HEK293 (cell line): ENCODE measurements at regions of chr15 and their contacts with region 1.

Region 1: GRCh38 chr15:90886041-90886614 is 1.8 kb downstream of the FES start:
- H3K4me3 ChIP-seq: no peak overlapping the region
- H3K27ac ChIP-seq: no peak overlapping the region
- H3K4me1 ChIP-seq: no peaks in the 10 kb centered on the region
- CTCF ChIP-seq: peak; percentile 94

Region 2: DNA sequence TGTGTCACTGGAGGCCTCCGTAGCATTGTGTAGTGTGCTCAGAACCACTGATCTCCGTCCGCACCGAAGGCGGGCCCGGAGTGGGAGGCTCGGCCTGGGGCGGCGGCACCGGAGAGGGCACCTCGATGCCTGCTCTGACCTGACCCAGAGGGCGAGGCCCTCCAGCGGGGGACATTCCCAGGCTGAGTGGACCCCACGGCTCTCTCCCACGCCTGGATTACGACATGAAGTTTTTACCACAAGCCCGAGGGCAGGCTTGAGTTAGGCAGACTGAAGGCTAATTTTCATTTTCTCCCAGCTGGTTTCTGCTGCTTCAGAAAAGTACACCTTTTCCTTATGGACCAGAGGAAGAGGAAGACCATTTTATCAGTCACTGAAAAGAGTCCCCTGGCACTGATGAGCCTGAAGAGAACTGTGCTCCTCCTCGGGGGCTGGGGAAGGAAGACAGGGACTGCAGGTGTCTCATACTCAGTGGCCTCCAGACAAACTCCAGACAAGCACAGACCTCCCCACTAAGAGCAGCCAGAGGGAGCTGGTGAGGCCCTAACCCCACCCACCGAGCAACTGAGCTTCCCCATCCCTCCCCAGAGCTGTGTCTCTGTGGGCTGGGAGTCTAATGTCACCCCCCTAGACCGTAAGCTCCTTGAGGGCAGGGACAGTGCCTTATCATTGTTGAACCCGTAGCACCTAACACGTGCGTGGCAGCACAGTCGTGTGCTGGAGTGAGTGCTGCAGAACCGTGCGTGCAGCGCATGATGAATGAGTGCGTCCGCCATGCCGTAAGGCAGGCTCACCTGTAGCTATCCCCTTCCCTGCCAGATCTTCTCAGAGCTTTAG is 243.4 kb before region 1 on chr15:
- CTCF ChIA-PET with region 1: interaction called, 44 read pairs
- POLR2A ChIA-PET with region 1: interaction called, 6 read pairs
- H3K4me3 ChIP-seq: no peak overlapping the region
- H3K27ac ChIP-seq: no peak overlapping the region
- H3K4me1 ChIP-seq: no peaks in the 10 kb centered on the region
- CTCF ChIP-seq: no peak

Region 3: GRCh38 chr15:90648137-90649070 is 237.7 kb before region 1 on chr15:
- CTCF ChIA-PET with region 1: interaction called, 44 read pairs
- POLR2A ChIA-PET with region 1: interaction called, 6 read pairs
- H3K4me3 ChIP-seq: no peak overlapping the region
- H3K27ac ChIP-seq: no peak overlapping the region
- H3K4me1 ChIP-seq: no peaks in the 10 kb centered on the region
- CTCF ChIP-seq: peak; percentile 62; the same call in 1 of the 2 replicates

Region 4: DNA sequence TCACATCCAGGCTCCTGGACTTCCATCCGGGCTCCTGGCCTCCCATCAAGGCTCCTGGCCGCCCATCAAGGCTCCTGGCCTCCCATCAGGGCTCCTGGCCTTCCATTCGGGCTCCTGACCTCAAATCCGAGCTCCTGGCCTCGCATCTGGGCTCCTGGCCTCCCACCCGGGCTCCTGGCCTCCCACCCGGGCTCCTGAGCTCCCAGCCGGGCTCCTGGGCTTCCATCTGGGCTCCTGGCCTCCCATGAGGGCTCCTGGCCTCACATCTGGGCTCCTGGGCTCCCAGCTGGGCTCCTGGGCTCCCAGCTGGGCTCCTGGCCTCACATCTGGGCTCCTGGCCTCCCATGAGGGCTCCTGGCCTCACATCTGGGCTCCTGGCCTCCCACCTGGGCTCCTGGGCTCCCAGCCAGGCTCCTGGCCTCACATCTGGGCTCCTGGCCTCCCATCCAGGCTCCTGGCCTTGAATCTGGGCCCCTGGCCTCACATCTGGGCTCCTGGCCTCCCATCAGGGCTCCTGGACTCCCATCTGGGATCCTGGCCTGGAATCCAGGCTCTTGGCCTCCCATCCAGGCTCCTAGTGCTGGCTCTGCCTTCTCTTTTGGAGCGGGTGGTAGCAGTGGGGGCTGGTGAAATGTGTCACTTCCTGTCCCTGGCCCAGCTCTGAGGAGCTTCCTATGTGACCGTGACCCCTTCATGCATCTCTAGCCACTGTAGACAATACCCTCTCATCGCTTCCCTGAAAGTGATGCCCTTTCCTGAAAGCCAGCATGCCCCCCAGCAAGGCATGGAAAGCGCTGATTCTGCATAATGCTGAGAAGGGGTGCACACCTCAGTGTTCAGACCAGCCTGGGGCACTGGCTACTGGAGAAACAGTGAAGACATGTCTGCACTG is 231.6 kb before region 1 on chr15:
- CTCF ChIA-PET with region 1: interaction called, 22 read pairs
- POLR2A ChIA-PET with region 1: no interaction called
- H3K4me3 ChIP-seq: no peak overlapping the region
- H3K27ac ChIP-seq: no peak overlapping the region
- H3K4me1 ChIP-seq: no peaks in the 10 kb centered on the region
- CTCF ChIP-seq: no peak

Region 5: GRCh38 chr15:90762109-90762508 is 124.0 kb before region 1 on chr15:
- CTCF ChIA-PET with region 1: interaction called, 10 read pairs
- POLR2A ChIA-PET with region 1: no interaction called
- H3K4me3 ChIP-seq: no peak overlapping the region
- H3K27ac ChIP-seq: no peak overlapping the region
- H3K4me1 ChIP-seq: no peaks in the 10 kb centered on the region
- CTCF ChIP-seq: no peak

Region 6: DNA sequence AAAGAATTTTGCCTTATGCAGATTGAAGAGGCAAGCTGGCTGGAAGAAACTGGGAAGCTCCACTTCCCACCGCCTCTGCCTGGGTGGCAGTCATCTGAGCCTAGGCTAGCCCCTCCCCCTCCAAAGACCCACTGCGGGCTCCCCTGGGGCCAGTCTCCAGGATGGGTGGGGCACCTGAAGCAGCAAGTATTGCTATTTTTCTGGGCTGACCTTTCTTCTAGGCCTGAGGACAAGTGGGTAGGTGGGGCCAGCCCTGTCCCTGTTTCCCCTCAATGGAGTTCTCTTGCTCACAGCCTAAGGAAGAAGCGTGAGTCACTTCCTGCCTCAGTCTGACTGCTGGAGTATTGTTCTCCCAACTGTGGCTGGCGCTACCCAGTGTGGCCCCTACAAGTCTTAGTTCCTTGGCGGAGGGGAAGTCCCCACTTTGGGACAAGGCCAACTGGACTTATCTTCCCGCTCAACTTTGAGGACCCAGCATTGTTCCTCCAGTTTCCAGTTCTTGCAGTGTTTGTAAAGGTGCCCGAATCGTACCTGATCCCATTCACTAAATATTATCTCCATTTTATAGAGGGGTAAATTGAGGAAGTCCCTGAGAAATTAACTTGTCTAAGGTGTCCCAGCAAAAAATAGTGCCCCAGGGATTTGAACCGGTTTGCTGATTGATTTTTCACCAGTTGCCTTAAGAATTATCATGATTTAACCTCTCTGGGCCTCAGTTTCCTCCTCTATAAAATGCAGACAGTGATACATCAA is 16.4 kb before region 1 on chr15:
- CTCF ChIA-PET with region 1: interaction called, 23 read pairs
- POLR2A ChIA-PET with region 1: interaction called, 3 read pairs
- H3K4me3 ChIP-seq: no peak overlapping the region
- H3K27ac ChIP-seq: peak overlapping the region; percentile 96
- H3K4me1 ChIP-seq: peaks cover 54% of the 10 kb centered on the region
- CTCF ChIP-seq: no peak

Region 7: DNA sequence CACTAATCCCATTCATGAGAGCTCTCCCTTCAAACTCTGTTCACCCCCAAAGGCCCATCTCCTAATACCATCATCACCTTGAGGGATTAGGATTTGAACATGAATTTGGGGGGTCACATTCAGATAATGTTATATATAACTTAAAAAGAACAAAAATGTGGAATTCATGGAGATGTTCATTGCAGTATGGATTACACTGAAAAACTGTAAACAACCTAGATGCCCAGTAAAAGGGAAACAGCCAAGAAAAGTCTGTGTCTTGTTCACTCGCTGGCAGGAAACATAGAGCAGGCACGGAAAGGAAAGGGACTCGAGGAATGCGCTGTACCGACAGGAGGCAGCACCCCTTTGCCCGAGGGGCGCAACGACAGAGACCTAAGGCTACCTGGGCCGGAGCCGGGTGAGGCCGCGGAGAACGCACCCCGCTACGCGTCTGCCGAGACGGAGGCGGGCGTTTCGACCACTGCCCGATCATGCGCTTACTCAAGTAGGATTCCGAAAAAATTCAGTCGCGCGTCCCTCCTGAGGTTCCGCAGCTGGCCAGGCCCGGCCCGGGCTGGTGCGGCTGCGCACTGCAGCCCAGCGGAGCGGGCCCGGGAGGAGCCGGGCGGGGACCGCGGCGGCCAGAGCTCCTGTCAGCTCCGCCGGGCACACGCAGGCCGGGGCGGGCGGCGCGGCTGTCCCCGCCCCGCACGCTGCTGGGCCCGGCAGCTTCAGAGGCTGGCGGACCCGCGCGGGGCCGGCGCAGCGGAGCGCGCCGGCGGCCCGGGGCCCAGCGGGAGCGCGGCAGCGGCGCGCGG is 16.1 kb after region 1 on chr15:
- CTCF ChIA-PET with region 1: interaction called, 17 read pairs
- POLR2A ChIA-PET with region 1: interaction called, 4 read pairs
- H3K4me3 ChIP-seq: peak overlapping the region; percentile 74
- H3K27ac ChIP-seq: peak overlapping the region; percentile 98
- H3K4me1 ChIP-seq: peaks cover 13% of the 10 kb centered on the region
- CTCF ChIP-seq: peak; percentile 97

Region 8: GRCh38 chr15:90918835-90919234 is 32.7 kb after region 1 on chr15:
- CTCF ChIA-PET with region 1: no interaction called
- POLR2A ChIA-PET with region 1: no interaction called
- H3K4me3 ChIP-seq: no peak overlapping the region
- H3K27ac ChIP-seq: no peak overlapping the region
- H3K4me1 ChIP-seq: no peaks in the 10 kb centered on the region
- CTCF ChIP-seq: no peak

Region 9: GRCh38 chr15:90954712-90955671 is 68.9 kb after region 1 on chr15 and contains the start of gene RCCD1:
- CTCF ChIA-PET with region 1: no interaction called
- POLR2A ChIA-PET with region 1: no interaction called
- H3K4me3 ChIP-seq: peak within 1 kb of the TSS; percentile 73
- H3K27ac ChIP-seq: peak within 1 kb of the TSS; percentile 88
- H3K4me1 ChIP-seq: no peaks in the 10 kb centered on the region; the same call in 1 of the 2 replicates
- CTCF ChIP-seq: no peak